Colonic mucosa (tissue), 4 donors: ENCODE measurements at regions of chr7 and their contacts with region 1.

Region 1: GRCh38 chr7:73667344-73668102 is at the start of gene VPS37D:
- DNase-seq: peak; percentile 94
- H3K4me3 ChIP-seq: peak within 1 kb of the TSS; percentile 31
- H3K27ac ChIP-seq: no peak within 1 kb of the TSS
- H3K4me1 ChIP-seq: no peaks in the 10 kb centered on the region
- H3K27me3 ChIP-seq: no peaks in the 10 kb centered on the region
- CTCF ChIP-seq: peak; percentile 51
- total RNA-seq, gene VPS37D: 0.62 to 2.0 TPM

Region 2: DNA sequence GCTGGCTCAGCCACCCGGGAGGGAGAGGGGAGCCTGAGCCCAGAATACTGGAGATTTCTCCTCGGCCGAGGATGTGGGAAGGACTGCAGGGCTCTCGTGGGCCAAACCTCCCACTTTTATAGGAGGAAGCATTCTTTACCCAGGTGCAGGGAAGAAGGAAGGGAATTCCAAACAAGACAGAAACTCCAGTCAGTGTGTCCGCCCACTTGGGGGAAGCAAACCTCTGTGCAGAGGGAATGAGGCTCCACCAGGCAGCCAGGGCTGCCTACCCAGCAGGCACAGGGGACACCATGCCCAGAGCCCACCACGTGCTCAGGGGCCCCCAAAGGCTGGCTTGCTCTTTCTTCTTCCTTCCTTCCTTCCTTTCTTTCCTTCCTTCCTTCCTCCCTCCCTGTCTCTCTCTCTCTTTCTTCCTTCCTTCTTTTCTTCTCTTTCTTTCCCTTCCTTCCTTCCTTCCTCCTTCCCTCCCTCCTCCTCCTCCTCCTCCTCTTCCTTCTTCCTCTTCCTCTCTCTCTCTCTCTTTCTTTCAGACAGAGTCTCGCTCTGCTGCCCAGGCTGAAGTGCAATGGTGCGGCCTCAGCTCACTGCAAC is 249.3 kb before region 1 on chr7:
- intact Hi-C with region 1: no loop called
- DNase-seq: no peak
- H3K4me3 ChIP-seq: no peak overlapping the region
- H3K27ac ChIP-seq: no peak overlapping the region
- H3K4me1 ChIP-seq: no peaks in the 10 kb centered on the region
- H3K27me3 ChIP-seq: no peaks in the 10 kb centered on the region
- CTCF ChIP-seq: no peak

Region 3: GRCh38 chr7:73712773-73713172 is 45.2 kb after region 1 on chr7:
- intact Hi-C with region 1: loop called (anchors 5 kb)
- DNase-seq: no peak
- H3K4me3 ChIP-seq: no peak overlapping the region
- H3K27ac ChIP-seq: no peak overlapping the region
- H3K4me1 ChIP-seq: peaks cover 4% of the 10 kb centered on the region
- H3K27me3 ChIP-seq: no peaks in the 10 kb centered on the region
- CTCF ChIP-seq: no peak

Region 4: DNA sequence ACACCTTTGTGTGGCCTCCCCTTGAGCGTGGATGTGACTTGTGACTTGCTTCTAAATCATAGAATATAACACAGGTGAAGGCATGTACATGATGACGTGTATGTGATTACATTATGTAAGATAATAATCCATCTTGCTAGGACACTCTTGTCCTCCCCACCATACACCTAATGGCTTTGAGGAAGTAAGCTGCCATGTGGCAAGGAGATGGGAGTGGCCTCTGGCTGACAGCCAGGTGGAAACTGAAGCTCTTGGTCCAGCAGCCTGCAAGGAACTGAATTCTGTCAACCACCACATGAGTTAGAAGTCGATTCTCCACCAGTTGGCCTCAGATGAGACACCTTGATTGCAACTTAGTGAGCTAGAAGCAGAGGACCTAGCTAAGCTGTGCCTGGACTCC is 293.0 kb after region 1 on chr7:
- intact Hi-C with region 1: no loop called
- DNase-seq: peak; percentile 80
- H3K4me3 ChIP-seq: no peak overlapping the region
- H3K27ac ChIP-seq: no peak overlapping the region
- H3K4me1 ChIP-seq: no peaks in the 10 kb centered on the region
- H3K27me3 ChIP-seq: no peaks in the 10 kb centered on the region
- CTCF ChIP-seq: no peak